ENCODE measurements at regions of chr1 and their contacts with region 1.

Region 1: DNA sequence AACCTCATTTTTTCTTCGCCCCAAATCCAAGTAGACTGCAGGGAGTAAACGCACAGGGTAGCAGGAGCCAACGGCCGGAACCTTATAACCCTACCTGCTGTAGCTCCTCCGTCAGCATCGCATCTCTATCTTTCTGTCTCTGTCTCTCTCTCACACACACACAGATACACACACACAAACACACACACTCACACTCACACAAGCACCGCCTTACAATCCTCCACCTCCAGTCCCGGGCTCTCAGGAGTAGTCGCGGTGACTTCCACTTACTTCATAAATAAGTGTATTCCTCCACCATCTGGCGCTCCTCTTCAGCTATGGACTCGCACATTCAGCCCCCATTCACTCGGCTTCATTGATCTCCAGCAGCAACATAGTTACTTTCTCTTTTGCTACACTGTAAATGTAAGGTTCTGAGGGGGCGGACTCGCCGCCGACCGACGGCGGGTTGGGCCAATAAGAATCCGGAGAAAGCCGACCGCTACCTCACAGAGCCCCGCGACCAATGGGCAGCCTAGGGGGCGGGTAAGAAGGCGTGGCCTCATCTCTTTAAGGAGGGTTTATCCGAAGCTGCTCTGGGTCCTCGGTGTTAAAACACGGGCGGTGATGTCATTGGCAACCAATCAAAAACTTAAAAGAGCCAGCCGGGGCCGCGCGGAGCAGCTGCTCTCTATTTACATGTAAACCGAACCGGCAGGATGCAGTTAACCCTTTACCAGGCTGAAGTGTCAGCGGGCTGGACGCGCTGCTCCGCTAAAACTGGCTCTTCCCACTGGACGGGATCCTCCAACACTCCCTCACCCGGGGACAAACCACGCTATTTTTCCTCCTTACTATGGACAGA is at the start of gene DUSP10:
- DNase-seq: peak; percentile 98 to 99
- H3K4me3 ChIP-seq: peak within 1 kb of the TSS; percentile 72
- H3K27ac ChIP-seq: peak within 1 kb of the TSS; percentile 88
- H3K4me1 ChIP-seq: peaks cover 26% of the 10 kb centered on the region
- H3K27me3 ChIP-seq: no peaks in the 10 kb centered on the region
- CTCF ChIP-seq: 0 out of 2 replicates have a peak, but pooled peaks have one; percentile 18
- total RNA-seq, gene DUSP10: 7.0 and 8.7 TPM in 2 replicates

Region 2: GRCh38 chr1:220873868-220874655 is 867.9 kb before region 1 on chr1:
- CTCF ChIA-PET with region 1: no interaction called
- POLR2A ChIA-PET with region 1: no interaction called
- intact Hi-C with region 1: loop called (anchors 1 kb)
- DNase-seq: peak in 1 of 2 experiments; percentile 35
- H3K4me3 ChIP-seq: no peak overlapping the region
- H3K27ac ChIP-seq: no peak overlapping the region
- H3K4me1 ChIP-seq: no peaks in the 10 kb centered on the region
- H3K27me3 ChIP-seq: no peaks in the 10 kb centered on the region
- CTCF ChIP-seq: peak; percentile 82

Region 3: DNA sequence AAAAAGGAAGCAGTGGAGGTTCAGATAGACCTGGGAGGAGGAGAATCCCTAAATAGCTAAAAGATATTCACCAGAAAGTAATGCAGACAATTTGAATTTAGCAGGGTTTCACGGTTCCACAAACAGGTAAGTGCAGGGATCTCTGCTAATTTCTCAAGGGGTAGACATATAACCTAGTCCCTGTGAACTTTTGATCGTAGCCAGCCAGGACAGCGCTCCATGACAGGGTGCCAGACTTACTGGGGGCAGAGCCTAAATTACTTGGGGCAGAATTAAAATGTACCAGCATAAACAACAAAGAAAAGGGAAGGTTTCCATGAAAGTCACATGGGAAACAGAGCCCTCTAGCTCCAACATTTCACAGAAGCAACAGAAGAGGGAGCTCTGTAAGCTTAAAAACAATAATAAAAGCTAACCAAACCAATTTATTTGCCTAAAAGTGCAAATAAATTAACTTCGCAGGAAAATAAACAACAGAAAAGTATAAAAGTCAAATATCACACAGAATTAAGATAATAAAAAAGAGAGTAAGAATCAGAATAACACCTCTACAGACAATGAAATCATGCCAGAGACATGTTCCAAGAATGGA is 198.3 kb before region 1 on chr1:
- CTCF ChIA-PET with region 1: interaction called, 5 read pairs
- POLR2A ChIA-PET with region 1: no interaction called
- intact Hi-C with region 1: loop called (anchors 1 kb)
- DNase-seq: peak in 1 of 2 experiments; percentile 3
- H3K4me3 ChIP-seq: no peak overlapping the region
- H3K27ac ChIP-seq: no peak overlapping the region
- H3K4me1 ChIP-seq: no peaks in the 10 kb centered on the region
- H3K27me3 ChIP-seq: no peaks in the 10 kb centered on the region
- CTCF ChIP-seq: peak; percentile 67

Region 4: DNA sequence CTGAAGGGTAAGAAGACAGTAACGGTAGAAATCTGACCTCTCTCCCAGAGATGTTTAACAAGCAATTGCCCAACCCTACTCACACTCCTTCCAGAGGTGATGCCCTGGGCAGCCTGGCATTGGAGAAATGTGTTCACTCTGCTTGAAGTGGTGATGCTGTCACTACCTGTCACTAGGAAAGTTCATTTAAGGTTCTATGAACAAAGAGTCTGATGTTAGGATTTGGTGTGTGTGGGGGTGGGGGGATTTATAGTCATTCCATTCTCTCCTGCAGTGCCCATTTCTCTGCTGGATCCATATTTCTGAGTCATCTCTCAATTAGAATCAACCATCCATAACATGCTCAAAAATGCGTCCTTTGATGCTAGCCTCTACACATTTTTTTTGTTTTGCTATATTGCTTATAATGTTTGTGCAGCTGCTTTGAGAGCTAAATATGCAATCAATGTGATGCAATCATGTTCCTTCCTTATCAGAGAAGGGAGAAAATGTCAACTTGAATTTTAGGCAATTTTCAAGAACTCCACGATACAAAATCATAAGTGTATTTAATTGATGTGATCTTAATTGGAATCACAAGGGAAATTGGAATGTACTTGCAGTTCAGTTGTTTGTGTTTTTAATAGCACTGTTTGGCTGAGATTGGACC is 173.9 kb before region 1 on chr1:
- CTCF ChIA-PET with region 1: no interaction called
- POLR2A ChIA-PET with region 1: no interaction called
- intact Hi-C with region 1: no loop called
- DNase-seq: no peak
- H3K4me3 ChIP-seq: no peak overlapping the region
- H3K27ac ChIP-seq: no peak overlapping the region
- H3K4me1 ChIP-seq: peaks cover 5% of the 10 kb centered on the region; the same call in 1 of the 2 replicates
- H3K27me3 ChIP-seq: no peaks in the 10 kb centered on the region
- CTCF ChIP-seq: no peak

Region 5: GRCh38 chr1:221809031-221810029 is 67.4 kb after region 1 on chr1:
- CTCF ChIA-PET with region 1: no interaction called
- POLR2A ChIA-PET with region 1: interaction called, 3 read pairs
- intact Hi-C with region 1: loop called (anchors 1 kb)
- DNase-seq: no peak
- H3K4me3 ChIP-seq: no peak overlapping the region
- H3K27ac ChIP-seq: peak overlapping the region; percentile 90
- H3K4me1 ChIP-seq: peaks cover 59% of the 10 kb centered on the region
- H3K27me3 ChIP-seq: no peaks in the 10 kb centered on the region
- CTCF ChIP-seq: no peak

Region 6: DNA sequence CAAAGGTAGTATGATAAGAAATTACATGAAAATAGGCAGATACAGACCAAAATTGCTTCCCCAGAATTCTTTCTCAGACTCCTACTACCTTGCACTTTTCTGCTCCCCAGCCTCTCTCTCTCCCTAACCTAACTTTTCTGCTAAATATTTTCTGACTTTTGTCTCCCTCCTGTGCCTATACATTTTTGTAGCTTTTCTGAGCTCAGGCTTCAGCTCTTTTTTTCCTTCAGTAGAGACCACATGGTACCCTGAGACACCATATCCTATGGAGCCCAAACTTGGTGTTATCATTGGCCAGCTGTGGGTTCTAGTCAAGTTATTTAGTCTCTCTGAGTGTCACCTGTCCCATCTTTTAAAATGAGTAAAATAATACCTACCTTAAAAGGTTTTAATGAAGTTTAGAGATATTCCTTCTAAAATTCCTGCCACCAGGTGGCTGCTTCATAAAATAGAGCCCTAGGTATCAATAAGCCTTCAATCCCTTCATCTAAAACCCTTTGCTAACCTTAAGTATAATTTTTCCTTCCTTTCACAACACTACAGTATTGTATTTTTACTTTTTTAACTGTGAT is 237.6 kb after region 1 on chr1:
- CTCF ChIA-PET with region 1: no interaction called
- POLR2A ChIA-PET with region 1: interaction called, 21 read pairs
- intact Hi-C with region 1: no loop called
- DNase-seq: no peak
- H3K4me3 ChIP-seq: no peak overlapping the region
- H3K27ac ChIP-seq: 0 out of 2 replicates have a peak overlapping the region, but pooled peaks have one; percentile 8
- H3K4me1 ChIP-seq: no peaks in the 10 kb centered on the region
- H3K27me3 ChIP-seq: no peaks in the 10 kb centered on the region
- CTCF ChIP-seq: peak; percentile 62

Region 7: DNA sequence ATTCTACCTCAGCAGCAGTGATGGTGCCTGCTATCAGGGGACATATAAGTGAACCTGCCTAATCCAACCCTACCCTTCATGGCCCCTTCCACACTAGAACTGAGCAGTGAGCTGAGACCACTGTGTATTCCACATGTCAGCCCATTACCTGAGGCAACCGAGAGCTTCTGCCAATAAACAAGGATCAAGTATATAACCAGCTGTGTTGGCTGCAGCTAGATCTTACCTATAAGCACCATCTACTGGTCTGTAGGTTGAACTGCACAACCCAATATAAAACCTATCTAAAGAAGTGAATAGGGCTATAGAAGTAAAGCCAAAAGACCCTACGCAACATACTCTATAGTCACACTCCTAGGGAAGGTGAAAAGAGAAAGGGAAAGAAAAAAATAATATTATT is 429.1 kb after region 1 on chr1:
- CTCF ChIA-PET with region 1: no interaction called
- POLR2A ChIA-PET with region 1: no interaction called
- intact Hi-C with region 1: loop called (anchors 1 kb)
- DNase-seq: peak; percentile 3 to 38
- H3K4me3 ChIP-seq: no peak overlapping the region
- H3K27ac ChIP-seq: no peak overlapping the region
- H3K4me1 ChIP-seq: no peaks in the 10 kb centered on the region
- H3K27me3 ChIP-seq: no peaks in the 10 kb centered on the region
- CTCF ChIP-seq: peak; percentile 85

Region 8: GRCh38 chr1:222240536-222241181 is 498.7 kb after region 1 on chr1:
- CTCF ChIA-PET with region 1: no interaction called
- POLR2A ChIA-PET with region 1: no interaction called
- intact Hi-C with region 1: no loop called
- DNase-seq: no peak
- H3K4me3 ChIP-seq: no peak overlapping the region
- H3K27ac ChIP-seq: no peak overlapping the region
- H3K4me1 ChIP-seq: peaks cover 21% of the 10 kb centered on the region
- H3K27me3 ChIP-seq: no peaks in the 10 kb centered on the region
- CTCF ChIP-seq: no peak

Measured in PC-9 (cell line).